B cell (primary cell): ENCODE measurements at regions of chr13 and their contacts with region 1.

Region 1: GRCh38 chr13:66657165-66657881 is 572.8 kb downstream of the PCDH9 start:
- DNase-seq: no peak
- ATAC-seq: no peak
- H3K4me3 ChIP-seq: no peak overlapping the region
- H3K4me3 Mint-ChIP-seq: peak overlapping the region; percentile 36
- H3K27ac ChIP-seq: peak overlapping the region in 1 of 2 donors; percentile 53
- H3K27ac Mint-ChIP-seq: peak overlapping the region; percentile 54
- H3K4me1 ChIP-seq: peaks cover 30 to 40% of the 10 kb centered on the region in 2 donors
- H3K4me1 Mint-ChIP-seq: peaks cover 44% of the 10 kb centered on the region
- H3K27me3 ChIP-seq: no peaks in the 10 kb centered on the region
- H3K27me3 Mint-ChIP-seq: no peaks in the 10 kb centered on the region
- CTCF ChIP-seq: no peak

Region 2: GRCh38 chr13:66644855-66645460 is 12.4 kb before region 1 on chr13:
- CTCF ChIA-PET with region 1: no interaction called
- POLR2A ChIA-PET with region 1: interaction called, 3 read pairs
- intact Hi-C with region 1: loop called (anchors 2 kb)
- DNase-seq: peak; percentile 28
- ATAC-seq: peak; percentile 41
- H3K4me3 ChIP-seq: peak overlapping the region in 3 of 5 experiments; percentile 7 to 49 (median 15)
- H3K4me3 Mint-ChIP-seq: peak overlapping the region; percentile 62
- H3K27ac ChIP-seq: peak overlapping the region; percentile 64 to 78
- H3K27ac Mint-ChIP-seq: peak overlapping the region; percentile 83
- H3K4me1 ChIP-seq: peaks cover 13 to 20% of the 10 kb centered on the region in 2 donors
- H3K4me1 Mint-ChIP-seq: peaks cover 36% of the 10 kb centered on the region
- H3K27me3 ChIP-seq: no peaks in the 10 kb centered on the region
- H3K27me3 Mint-ChIP-seq: no peaks in the 10 kb centered on the region
- CTCF ChIP-seq: no peak

Region 3: DNA sequence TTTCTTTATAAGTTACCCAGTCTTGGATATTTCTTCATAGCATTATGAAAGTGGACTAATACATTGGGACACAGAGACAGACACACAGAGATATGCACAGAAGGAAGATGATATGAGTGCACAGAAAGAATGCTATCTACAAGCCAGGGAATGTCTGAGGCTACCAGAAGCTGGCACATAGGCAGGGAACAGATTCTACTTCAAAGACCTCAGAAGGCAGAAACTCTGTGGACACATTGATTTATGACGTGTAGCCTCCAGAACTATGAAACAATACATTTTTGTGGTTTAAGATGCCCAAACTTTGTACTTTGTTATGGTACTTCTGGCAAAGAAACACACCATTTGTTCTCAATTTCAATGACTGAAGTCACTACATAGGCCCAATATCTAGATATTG is 16.1 kb after region 1 on chr13:
- CTCF ChIA-PET with region 1: no interaction called
- POLR2A ChIA-PET with region 1: no interaction called
- intact Hi-C with region 1: no loop called
- DNase-seq: no peak
- ATAC-seq: no peak
- H3K4me3 ChIP-seq: no peak overlapping the region
- H3K4me3 Mint-ChIP-seq: no peak overlapping the region
- H3K27ac ChIP-seq: no peak overlapping the region
- H3K27ac Mint-ChIP-seq: no peak overlapping the region
- H3K4me1 ChIP-seq: no peaks in the 10 kb centered on the region
- H3K4me1 Mint-ChIP-seq: no peaks in the 10 kb centered on the region
- H3K27me3 ChIP-seq: no peaks in the 10 kb centered on the region
- H3K27me3 Mint-ChIP-seq: no peaks in the 10 kb centered on the region
- CTCF ChIP-seq: no peak

Region 4: DNA sequence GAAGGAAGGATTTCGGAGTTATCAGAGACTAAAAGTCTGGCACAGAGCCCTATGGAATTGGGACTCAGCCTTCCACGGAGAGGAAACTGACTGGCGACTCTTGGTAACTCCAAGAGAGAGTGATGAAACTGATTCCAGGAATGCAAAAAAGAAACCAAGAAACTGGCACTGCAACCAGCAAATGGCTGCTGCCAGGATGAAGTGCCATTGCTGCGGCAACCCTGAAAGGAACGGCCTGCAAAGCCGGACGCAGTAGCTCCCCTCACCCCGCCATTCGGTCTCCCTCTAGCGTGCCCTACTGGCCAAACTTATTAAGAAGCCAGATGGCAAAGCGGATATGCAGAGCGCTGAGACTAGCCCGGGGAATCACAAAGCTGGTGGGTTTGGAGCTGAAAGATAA is 336.8 kb after region 1 on chr13:
- CTCF ChIA-PET with region 1: no interaction called
- POLR2A ChIA-PET with region 1: interaction called, 3 read pairs
- intact Hi-C with region 1: loop called (anchors 10 kb)
- DNase-seq: peak; percentile 68
- ATAC-seq: peak; percentile 60
- H3K4me3 ChIP-seq: peak overlapping the region in 3 of 5 experiments; percentile 4 to 36 (median 10)
- H3K4me3 Mint-ChIP-seq: peak overlapping the region; percentile 58
- H3K27ac ChIP-seq: peak overlapping the region; percentile 84 to 90
- H3K27ac Mint-ChIP-seq: peak overlapping the region; percentile 93
- H3K4me1 ChIP-seq: peaks cover 41 to 53% of the 10 kb centered on the region in 2 donors
- H3K4me1 Mint-ChIP-seq: peaks cover 46% of the 10 kb centered on the region
- H3K27me3 ChIP-seq: no peaks in the 10 kb centered on the region
- H3K27me3 Mint-ChIP-seq: no peaks in the 10 kb centered on the region
- CTCF ChIP-seq: peak; percentile 53